AG04450 (cell line): ENCODE measurements at regions of chr6 and their contacts with region 1.

Region 1: DNA sequence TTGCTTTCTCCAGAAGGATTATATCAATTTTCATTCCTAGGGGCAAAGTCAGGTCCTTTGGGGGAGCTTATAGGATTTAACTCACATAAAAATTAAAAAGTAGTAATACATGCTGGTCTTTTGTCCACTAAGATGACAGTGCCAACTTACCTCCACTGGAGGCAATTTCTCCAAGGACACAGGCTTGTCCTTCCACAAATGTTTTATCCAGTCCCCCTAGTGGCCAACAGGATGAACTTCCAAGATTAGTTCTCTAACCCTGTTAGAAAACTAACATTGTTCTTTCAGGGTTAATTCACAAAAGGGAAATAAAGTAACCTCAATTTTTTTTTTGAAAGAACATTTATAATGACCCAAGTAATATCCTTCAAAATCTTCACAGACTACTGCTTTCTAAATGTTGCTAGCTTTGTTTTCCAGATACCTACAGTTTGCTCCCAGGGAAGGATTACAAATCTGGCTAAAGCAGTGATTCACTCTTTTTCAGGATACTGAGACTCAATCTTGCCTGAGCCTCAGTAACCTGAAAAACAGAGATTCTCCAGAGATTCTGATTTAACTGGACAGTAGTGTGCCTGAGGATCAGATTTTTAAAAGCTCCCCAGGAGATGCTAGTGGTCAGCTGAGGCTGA is 31.7 kb upstream of the UBR2 start:
- DNase-seq: no peak
- H3K4me3 ChIP-seq: no peak overlapping the region
- H3K27ac ChIP-seq: no peak overlapping the region
- H3K27me3 ChIP-seq: no peaks in the 10 kb centered on the region
- CTCF ChIP-seq: peak; percentile 84

Region 2: GRCh38 chr6:42224222-42224989 is 307.7 kb before region 1 on chr6:
- CTCF ChIA-PET with region 1: interaction called, 10 read pairs
- POLR2A ChIA-PET with region 1: no interaction called
- DNase-seq: no peak
- H3K4me3 ChIP-seq: no peak overlapping the region; the same call in 1 of the 2 replicates
- H3K27ac ChIP-seq: peak overlapping the region; percentile 49
- H3K27me3 ChIP-seq: no peaks in the 10 kb centered on the region
- CTCF ChIP-seq: no peak

Region 3: DNA sequence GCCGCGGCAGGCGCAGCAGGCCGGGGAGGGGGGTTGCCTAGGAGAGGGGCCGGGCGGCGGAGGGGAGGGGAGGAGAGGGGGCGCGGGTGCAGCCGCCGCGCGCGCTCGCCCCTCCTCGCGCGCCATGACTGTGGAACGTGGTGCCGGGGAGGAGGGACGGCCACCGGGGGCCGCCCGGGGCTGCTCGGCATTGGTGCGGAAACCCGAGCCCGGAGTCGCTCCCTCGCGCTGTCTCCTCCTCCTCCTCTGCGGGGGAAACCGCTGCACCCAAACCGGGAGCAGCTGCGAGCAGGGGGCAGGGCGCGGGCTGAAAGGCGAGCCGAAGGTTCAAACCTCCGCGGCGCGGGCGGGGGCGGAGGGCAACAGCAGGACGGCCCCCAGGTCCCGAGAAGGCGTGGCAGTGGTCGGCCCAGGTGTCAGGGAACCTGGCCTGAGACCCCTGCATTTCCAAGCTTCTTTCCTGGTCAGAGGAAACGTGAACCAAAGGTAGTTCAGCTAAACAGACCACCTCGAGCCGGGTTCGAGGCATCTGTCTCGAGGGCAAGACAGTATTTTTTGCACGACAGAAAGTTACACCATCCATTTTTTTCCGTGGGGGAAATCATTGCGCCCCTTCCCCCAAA is 79.0 kb before region 1 on chr6:
- CTCF ChIA-PET with region 1: interaction called, 11 read pairs
- POLR2A ChIA-PET with region 1: no interaction called
- DNase-seq: peak; percentile 78
- H3K4me3 ChIP-seq: peak overlapping the region; percentile 88
- H3K27ac ChIP-seq: peak overlapping the region; percentile 86
- H3K27me3 ChIP-seq: no peaks in the 10 kb centered on the region
- CTCF ChIP-seq: no peak

Region 4: DNA sequence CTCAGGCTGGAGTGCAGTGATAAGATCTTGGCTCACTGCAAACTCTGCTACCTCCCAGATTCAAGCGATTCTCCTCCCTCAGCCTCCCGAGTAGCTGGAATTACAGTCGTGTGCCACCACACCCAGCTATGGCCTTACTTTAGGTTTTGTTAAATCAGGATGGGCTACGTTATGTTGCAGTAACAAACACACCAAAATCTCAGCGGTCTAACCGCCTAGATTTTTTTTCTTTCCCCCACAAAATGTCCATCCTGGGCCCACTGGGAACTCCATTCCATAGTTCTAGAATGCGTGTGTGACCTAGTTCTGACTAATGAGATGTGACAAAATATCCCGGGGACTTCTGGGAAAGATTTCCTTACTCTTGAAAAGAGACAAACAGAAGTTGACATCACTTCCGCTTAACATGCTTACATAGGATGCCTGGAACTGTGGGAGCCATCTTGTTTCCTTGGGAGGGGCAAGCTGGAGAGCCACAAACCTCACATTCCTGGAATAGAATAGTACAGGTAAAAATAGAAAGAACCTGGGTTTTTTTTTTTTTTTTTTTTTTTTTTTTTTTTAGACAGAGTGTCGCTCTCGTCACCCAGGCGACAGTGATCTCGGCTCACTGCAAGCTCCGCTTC is 38.1 kb before region 1 on chr6:
- CTCF ChIA-PET with region 1: interaction called, 14 read pairs
- POLR2A ChIA-PET with region 1: no interaction called
- DNase-seq: no peak
- H3K4me3 ChIP-seq: no peak overlapping the region
- H3K27ac ChIP-seq: no peak overlapping the region
- H3K27me3 ChIP-seq: no peaks in the 10 kb centered on the region
- CTCF ChIP-seq: no peak

Region 5: GRCh38 chr6:42511803-42512422 is 20.2 kb before region 1 on chr6:
- CTCF ChIA-PET with region 1: interaction called, 27 read pairs
- POLR2A ChIA-PET with region 1: no interaction called
- DNase-seq: peak; percentile 18
- H3K4me3 ChIP-seq: no peak overlapping the region
- H3K27ac ChIP-seq: no peak overlapping the region
- H3K27me3 ChIP-seq: no peaks in the 10 kb centered on the region
- CTCF ChIP-seq: no peak

Region 6: GRCh38 chr6:42520786-42521607 is 11.2 kb before region 1 on chr6:
- CTCF ChIA-PET with region 1: interaction called, 26 read pairs
- POLR2A ChIA-PET with region 1: no interaction called
- DNase-seq: no peak
- H3K4me3 ChIP-seq: no peak overlapping the region
- H3K27ac ChIP-seq: no peak overlapping the region
- H3K27me3 ChIP-seq: no peaks in the 10 kb centered on the region
- CTCF ChIP-seq: no peak